HepG2 (cell line): ENCODE measurements at regions of chr17 and their contacts with region 1.

Region 1: GRCh38 chr17:28807925-28808634 is 34.5 kb downstream of the FAM222B start:
- DNase-seq: peak; percentile 68
- ATAC-seq: no peak
- H3K4me3 ChIP-seq: peak overlapping the region; percentile 4 to 25 (median 7); a peak in 3 of 6 replicates
- H3K27ac ChIP-seq: peak overlapping the region; percentile 62
- H3K4me1 ChIP-seq: peaks cover 72% of the 10 kb centered on the region
- H3K27me3 ChIP-seq: no peaks in the 10 kb centered on the region
- CTCF ChIP-seq: no peak
- EP300 ChIP-seq: no peak
- POLR2A ChIP-seq: no peak
- RAD21 ChIP-seq: no peak

Region 2: DNA sequence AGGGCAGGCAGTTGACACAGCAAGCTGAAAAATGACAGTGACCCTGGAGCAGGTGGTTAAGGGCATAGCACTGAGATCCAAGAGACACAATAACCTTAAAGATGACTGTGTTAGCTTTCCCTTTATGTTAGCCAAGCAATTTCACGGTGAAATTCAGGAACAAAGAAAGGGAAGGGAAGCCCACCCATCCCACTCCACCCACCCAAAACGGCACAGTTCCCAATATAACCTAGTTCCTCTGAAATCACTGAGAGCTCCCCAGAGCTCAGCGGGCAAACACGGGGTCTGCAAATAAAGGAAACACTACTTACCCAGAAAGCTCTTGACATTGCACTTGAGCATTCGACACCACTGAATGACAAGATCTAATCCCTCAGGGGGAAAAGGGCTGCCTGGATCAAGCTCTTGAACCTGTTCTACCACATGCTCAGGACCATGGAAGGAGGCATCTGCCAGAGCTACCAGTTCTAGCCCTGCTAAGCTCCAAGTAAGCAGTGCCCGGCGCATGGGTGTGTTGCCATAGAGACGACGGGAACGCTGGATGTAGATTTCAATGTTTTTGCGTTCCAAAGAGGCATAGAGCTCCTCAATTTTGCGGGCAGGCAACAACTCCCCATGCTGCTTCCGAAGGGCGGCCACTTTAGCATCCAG is 173.7 kb before region 1 on chr17:
- CTCF ChIA-PET with region 1: no interaction called
- POLR2A ChIA-PET with region 1: no interaction called
- in situ Hi-C with region 1: no loop called
- intact Hi-C with region 1: no loop called
- DNase-seq: no peak
- ATAC-seq: no peak
- H3K4me3 ChIP-seq: no peak overlapping the region
- H3K27ac ChIP-seq: no peak overlapping the region
- H3K4me1 ChIP-seq: no peaks in the 10 kb centered on the region
- H3K27me3 ChIP-seq: no peaks in the 10 kb centered on the region
- CTCF ChIP-seq: no peak
- EP300 ChIP-seq: no peak
- POLR2A ChIP-seq: no peak
- RAD21 ChIP-seq: no peak

Region 3: GRCh38 chr17:28777178-28777577 is 30.9 kb before region 1 on chr17:
- CTCF ChIA-PET with region 1: no interaction called
- POLR2A ChIA-PET with region 1: no interaction called
- in situ Hi-C with region 1: no loop called
- intact Hi-C with region 1: loop called (anchors 1 kb)
- DNase-seq: no peak
- ATAC-seq: no peak
- H3K4me3 ChIP-seq: no peak overlapping the region
- H3K27ac ChIP-seq: no peak overlapping the region
- H3K4me1 ChIP-seq: no peaks in the 10 kb centered on the region
- H3K27me3 ChIP-seq: no peaks in the 10 kb centered on the region; a peak in 1 of 5 replicates
- CTCF ChIP-seq: no peak
- EP300 ChIP-seq: no peak
- POLR2A ChIP-seq: no peak
- RAD21 ChIP-seq: no peak

Region 4: DNA sequence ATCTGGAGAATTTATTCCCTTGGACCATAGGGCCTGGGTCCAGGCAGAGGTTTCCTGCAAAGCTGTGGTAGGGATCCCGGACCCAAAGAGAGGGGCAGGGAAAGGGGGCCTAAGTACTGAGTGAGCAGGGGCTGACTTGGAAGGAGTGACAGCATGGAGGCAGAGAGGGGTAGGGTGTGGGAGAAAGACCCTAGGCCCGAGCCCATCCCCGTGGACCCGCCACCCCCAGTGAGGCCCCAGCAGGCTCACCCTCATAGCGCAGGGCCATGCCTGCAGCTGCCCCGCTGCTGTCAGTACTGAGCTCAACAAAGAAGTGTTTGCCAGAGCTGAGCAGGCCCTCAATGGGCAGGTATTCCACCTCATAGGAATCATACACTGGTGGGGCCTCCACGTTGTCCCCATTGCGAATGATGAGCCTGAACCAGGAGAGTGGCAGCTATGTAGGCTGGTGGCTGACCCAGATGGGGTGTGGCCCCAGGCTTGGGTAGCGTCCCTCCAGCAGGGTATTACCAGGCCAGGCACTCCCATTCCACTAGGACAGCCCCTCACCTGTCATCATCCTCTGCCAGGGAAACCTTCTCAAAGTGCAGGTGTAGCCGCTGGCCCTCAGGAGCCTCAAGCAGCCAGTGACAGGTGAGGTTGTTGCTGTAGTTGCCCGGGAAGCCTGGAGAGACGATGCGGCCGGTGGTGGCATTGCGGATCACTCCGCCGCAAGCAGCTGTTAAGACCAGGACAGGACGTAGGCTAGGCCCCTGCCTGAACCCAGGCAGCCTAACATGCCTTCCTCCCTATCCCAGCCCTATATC is 152.4 kb after region 1 on chr17:
- CTCF ChIA-PET with region 1: no interaction called
- POLR2A ChIA-PET with region 1: no interaction called
- in situ Hi-C with region 1: no loop called
- intact Hi-C with region 1: no loop called
- DNase-seq: no peak
- ATAC-seq: no peak
- H3K4me3 ChIP-seq: no peak overlapping the region
- H3K27ac ChIP-seq: no peak overlapping the region
- H3K4me1 ChIP-seq: peaks cover 21% of the 10 kb centered on the region
- H3K27me3 ChIP-seq: peaks cover 0 to 25% of the 10 kb centered on the region in 2 experiments; a peak in 4 of 5 replicates
- CTCF ChIP-seq: no peak
- EP300 ChIP-seq: no peak
- POLR2A ChIP-seq: no peak
- RAD21 ChIP-seq: no peak